Transverse colon (tissue), 4 donors: ENCODE measurements at regions of chr1 and their contacts with region 1.

Region 1: DNA sequence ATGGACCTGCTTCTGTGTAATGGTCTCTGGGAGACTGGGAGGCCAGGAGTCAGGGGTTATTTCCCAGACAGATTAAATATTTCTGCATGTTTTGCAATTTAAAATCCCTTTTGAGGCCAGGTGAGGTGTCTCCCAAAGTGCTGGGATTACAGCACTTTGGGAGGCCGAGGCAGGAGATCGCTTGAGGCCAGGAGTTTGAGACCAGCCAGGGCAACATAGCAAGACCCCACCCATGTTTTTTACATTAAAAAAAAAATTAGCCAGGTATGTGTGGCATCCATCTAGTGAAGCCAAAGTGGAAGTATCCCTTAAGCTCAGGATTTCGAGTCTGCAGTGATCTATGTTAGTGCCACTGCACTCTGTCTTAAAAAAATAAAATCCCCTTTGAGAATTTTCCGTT is 34.1 kb downstream of the ECHDC2 start:
- DNase-seq: no peak
- H3K4me3 ChIP-seq: no peak overlapping the region
- H3K27ac ChIP-seq: no peak overlapping the region
- H3K4me1 ChIP-seq: no peaks in the 10 kb centered on the region
- H3K27me3 ChIP-seq: no peaks in the 10 kb centered on the region
- CTCF ChIP-seq: no peak
- EP300 ChIP-seq: no peak
- POLR2A ChIP-seq: no peak

Region 2: DNA sequence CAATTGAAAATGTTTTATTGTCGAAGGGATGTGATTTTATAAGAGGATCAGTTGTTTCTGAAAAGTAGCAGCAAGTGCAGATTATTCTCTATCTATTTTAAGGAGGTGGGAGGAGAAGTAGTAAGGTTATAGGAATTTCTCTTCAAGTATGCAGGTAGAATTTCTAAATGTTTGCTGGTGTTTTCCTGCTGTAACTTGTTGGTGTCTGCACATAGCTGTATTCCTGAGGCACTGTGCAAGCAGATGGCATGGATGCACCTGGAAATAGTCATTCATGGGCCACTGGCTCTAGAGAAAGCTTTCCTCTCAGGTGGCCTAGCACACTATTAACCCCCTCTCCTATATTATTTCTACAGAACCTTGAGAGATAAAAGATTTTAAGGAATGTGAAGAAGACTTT is 144.2 kb after region 1 on chr1:
- in situ Hi-C with region 1: no loop called
- intact Hi-C with region 1: no loop called
- DNase-seq: no peak
- H3K4me3 ChIP-seq: no peak overlapping the region
- H3K27ac ChIP-seq: no peak overlapping the region
- H3K4me1 ChIP-seq: peaks cover 0 to 6% (median 0%) of the 10 kb centered on the region in 4 donors
- H3K27me3 ChIP-seq: no peaks in the 10 kb centered on the region
- CTCF ChIP-seq: no peak
- EP300 ChIP-seq: no peak
- POLR2A ChIP-seq: no peak

Region 3: DNA sequence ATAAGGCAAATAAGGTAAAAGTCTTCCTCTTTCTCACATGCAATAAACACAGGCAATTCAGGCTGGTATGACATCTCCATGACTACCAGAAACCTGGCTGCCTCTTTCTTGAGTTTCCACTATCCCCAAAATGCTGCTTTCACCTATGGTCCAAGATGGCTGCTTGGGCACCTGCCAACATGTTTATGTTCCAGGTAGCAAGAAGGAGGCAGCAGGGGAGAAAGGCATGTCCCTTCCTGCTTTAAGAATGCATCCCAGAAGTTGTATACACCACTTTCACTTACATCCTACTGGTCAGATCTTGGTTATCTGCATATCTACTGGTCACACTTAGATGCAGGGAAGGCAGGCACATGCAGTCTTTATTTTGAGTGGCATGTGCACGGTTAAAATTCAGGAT is 1641.1 kb after region 1 on chr1:
- in situ Hi-C with region 1: no loop called
- intact Hi-C with region 1: loop called (anchors 5 kb)
- DNase-seq: no peak
- H3K4me3 ChIP-seq: no peak overlapping the region
- H3K27ac ChIP-seq: no peak overlapping the region
- H3K4me1 ChIP-seq: no peaks in the 10 kb centered on the region
- H3K27me3 ChIP-seq: no peaks in the 10 kb centered on the region
- CTCF ChIP-seq: no peak
- EP300 ChIP-seq: no peak
- POLR2A ChIP-seq: no peak